Naive thymus-derived CD8-positive, alpha-beta T cell (primary cell): ENCODE measurements at regions of chr3 and their contacts with region 1.

Region 1: DNA sequence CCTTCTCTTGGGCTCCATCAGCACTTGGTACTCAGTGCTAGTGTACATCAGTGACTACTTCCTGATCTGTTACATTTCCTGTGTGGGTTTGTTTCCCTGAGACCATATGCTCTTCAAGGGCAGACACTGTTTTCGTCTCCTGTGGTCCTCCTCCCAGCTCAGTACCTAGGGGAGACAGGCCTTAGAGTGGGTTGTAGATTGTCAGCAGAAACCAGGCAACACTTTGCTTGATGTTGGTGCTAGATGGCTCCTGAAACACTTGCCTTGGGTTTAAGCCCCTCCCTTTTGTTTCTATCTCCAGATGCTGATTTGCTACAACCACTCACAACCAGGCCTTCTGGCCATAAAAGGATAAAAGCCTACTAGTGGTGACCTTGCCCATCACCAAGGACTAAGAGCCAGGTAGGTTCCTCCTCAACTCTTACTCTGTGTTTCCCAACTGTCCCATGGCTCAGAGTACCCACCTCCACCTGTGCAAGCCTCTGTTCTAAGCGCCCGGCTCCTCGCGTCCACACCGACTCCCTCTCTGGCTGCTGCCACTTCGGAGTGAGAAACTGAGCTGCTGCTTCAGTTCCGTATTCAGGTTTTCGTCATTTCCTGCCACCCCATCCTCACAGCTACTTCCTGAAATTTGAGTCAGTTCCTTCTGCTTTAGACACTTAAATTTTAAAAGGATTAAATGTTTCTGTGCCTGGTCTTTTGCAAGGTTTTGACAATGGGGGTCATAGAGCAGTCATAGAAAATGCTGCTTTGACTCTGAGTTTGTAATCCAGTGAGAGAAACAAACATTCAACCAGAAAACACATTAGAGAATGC is at the start of gene HCLS1:
- DNase-seq: peak; percentile 47 to 86 (median 74)
- ATAC-seq: peak; percentile 84 to 85
- H3K4me3 Mint-ChIP-seq: peak within 1 kb of the TSS; percentile 92 to 99 (median 96)
- H3K27ac Mint-ChIP-seq: peak within 1 kb of the TSS; percentile 97 to 100 (median 99)
- H3K4me1 Mint-ChIP-seq: peaks cover 34 to 62% (median 61%) of the 10 kb centered on the region in 4 donors
- H3K27me3 Mint-ChIP-seq: no peaks in the 10 kb centered on the region
- polyA plus RNA-seq, gene HCLS1: 375 to 453 (median 402) TPM

Region 2: GRCh38 chr3:121545574-121546455 is 114.7 kb before region 1 on chr3 and contains the start of gene POLQ:
- POLR2A ChIA-PET with region 1: interaction called, 10 read pairs
- DNase-seq: peak; percentile 66 to 93 (median 82)
- ATAC-seq: peak; percentile 99
- H3K4me3 Mint-ChIP-seq: peak within 1 kb of the TSS; percentile 85 to 95 (median 91)
- H3K27ac Mint-ChIP-seq: peak within 1 kb of the TSS; percentile 85 to 96 (median 92)
- H3K4me1 Mint-ChIP-seq: peaks cover 7 to 22% (median 16%) of the 10 kb centered on the region in 4 donors
- H3K27me3 Mint-ChIP-seq: no peaks in the 10 kb centered on the region
- polyA plus RNA-seq, gene POLQ: 0.02 to 0.18 (median 0.02) TPM

Region 3: DNA sequence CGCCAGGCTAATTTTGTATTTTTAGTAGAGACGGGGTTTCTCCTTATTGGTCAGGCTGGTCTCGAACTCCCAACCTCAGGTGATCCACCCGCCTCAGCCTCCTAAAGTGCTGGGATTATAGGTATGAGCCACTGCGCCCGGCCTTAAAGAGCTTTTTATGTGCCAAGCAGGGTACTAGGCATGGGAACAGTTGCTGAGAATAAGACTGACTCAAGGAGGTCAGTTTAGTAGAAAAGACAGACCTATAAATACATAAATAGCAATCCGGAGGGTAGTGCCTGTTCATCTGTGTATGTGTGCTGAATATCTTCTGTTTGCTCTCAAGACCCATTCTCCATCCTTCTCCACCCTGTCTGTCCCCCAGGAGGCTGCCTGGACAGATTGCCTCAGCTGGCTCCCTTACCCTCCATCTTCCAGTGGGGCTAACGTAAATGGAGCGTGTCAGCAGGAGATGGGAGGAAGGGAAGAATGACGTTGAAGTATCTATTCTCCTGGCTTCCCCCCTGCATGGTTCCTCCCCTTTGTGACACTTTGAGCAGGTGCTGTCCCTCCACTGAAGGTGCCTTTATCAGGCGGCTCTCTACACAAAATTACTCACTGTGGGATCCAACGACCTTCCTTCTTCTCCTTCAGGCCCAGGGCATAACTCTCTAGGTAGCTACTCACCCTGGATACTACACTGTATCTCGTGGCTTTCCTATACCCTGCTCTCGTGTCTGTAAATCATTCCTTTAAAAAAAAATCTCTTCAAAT is 36.2 kb before region 1 on chr3:
- POLR2A ChIA-PET with region 1: no interaction called
- DNase-seq: no peak
- ATAC-seq: no peak
- H3K4me3 Mint-ChIP-seq: no peak overlapping the region
- H3K27ac Mint-ChIP-seq: no peak overlapping the region
- H3K4me1 Mint-ChIP-seq: peaks cover 0 to 3% (median 0%) of the 10 kb centered on the region in 4 donors
- H3K27me3 Mint-ChIP-seq: peaks cover 0 to 11% (median 4%) of the 10 kb centered on the region in 5 donors

Region 4: DNA sequence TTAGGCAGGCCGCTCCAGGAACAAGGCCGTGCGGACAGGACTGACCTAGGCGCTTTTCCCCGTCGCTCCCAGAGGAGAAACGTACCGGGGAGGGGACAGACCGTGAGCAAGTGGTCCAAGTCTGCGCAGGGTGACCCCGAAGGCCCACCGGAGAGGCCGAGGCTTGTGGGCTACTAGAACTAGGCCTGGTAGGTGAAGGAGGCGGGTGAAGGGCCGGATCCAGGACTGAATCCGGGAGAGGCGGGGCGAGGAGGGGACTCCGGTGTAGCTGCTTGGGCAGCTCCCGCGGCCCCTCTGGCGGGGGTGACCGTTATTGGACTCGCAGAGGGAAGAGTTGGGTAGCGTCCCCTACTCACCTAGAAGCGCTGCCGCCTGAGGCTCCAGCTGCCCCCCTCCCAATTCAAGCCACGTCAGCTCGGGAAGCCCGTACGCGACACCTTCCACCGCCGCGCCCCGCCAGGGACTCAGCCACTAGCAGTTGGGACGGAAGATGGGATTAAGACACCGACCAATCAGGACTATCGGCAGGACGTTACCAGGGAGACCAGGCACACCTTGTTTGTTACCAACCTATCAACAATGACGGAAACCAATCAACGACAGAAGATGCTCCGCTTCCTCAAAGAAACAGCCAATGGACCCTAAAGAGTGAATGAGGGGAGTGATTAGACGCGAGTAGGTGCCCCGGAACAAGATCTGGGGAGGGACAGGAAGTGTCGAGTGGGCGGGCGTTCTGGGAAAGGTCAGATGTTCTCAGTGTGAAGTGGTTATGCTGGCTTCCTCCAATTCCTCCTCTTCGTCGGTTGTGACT is 88.9 kb after region 1 on chr3 and contains the start of gene GOLGB1:
- POLR2A ChIA-PET with region 1: interaction called, 14 read pairs
- DNase-seq: peak; percentile 81 to 98 (median 92)
- ATAC-seq: peak; percentile 91 to 93
- H3K4me3 Mint-ChIP-seq: no peak within 1 kb of the TSS
- H3K27ac Mint-ChIP-seq: peak within 1 kb of the TSS in 1 of 10 donors; percentile 79
- H3K4me1 Mint-ChIP-seq: peaks cover 2 to 12% (median 11%) of the 10 kb centered on the region in 4 donors
- H3K27me3 Mint-ChIP-seq: peaks cover 0 to 19% (median 14%) of the 10 kb centered on the region in 5 donors
- polyA plus RNA-seq, gene GOLGB1: 1.7 to 8.2 (median 2.8) TPM